ENCODE measurements at regions of chr7 and their contacts with region 1.

Region 1: GRCh38 chr7:27196287-27196767 is 3.6 kb downstream of the HOXA13 start:
- DNase-seq: peak; percentile 59
- H3K4me3 Mint-ChIP-seq: no peak overlapping the region
- H3K27ac Mint-ChIP-seq: no peak overlapping the region
- H3K4me1 Mint-ChIP-seq: peaks cover 6% of the 10 kb centered on the region
- H3K27me3 Mint-ChIP-seq: peaks cover 82% of the 10 kb centered on the region

Region 2: DNA sequence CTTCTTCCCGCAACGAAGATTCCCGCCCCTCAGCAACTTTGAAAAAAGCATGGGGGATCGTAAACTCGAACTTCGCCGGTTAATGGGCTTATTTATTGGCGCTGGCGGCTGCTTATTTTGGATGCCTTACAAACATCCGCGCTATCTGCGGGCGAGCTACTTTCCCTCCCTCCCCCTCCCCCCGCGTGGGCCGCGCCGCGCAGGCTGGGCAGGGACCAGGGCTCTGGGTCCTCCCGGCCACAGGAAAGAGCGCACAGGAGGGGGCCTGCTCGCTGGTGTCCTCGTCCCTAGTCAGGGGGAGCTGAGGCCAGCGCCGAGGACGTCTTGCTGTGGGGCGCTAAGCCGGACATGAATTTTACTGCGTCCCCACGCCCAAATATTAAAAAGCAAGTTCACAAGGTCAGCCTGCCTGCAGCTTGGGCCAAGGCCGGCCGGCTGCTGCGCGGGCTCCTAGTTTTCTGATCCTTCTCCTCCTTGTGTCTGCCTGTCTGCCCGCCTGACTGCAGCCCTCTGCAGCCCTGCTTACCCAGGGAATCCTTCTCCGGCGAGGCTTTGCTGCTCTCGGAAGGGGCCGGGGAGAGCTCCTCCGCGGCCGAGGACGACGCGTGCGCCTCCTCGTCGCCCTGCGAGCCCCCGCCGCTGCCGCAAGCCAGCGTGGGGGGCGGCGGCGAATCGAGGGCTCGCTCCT is 23.4 kb before region 1 on chr7:
- intact Hi-C with region 1: loop called (anchors 2 kb)
- DNase-seq: no peak
- H3K4me3 Mint-ChIP-seq: no peak overlapping the region
- H3K27ac Mint-ChIP-seq: no peak overlapping the region
- H3K4me1 Mint-ChIP-seq: peaks cover 2% of the 10 kb centered on the region
- H3K27me3 Mint-ChIP-seq: peaks cover 64% of the 10 kb centered on the region

Region 3: DNA sequence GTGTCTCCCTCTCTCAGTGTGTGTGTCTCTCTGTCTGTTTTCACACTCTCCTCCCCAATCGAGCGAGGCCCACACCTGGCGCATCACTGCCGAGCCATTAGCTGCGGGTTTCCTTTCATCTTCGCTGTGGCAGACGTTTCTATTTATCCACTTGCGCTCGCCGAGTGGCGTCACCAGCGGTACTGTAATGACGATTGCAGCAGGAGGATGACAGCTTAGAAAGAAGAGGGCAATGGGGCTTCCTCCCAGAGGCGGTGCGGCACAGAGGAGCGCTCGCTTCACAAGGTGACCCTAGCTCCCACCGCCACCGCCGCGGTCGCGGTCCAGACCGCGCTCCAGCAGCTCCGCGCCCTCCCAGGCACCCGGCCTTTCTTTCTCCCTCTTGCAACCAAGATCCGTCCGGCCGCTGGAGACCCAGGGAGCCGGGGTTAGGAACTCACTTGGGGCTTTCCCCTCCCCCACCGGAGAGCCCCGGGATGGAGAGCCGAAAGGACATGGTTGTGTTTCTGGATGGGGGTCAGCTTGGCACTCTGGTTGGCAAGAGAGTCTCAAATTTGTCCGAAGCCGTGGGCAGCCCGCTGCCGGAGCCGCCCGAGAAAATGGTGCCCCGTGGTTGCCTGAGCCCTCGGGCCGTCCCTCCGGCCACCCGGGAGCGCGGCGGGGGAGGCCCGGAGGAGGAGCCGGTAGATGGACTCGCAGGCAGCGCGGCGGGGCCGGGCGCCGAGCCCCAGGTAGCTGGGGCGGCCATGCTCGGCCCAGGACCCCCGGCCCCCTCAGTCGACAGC is 46.4 kb after region 1 on chr7 and contains the start of gene EVX1:
- intact Hi-C with region 1: loop called (anchors 2 kb)
- DNase-seq: no peak
- H3K4me3 Mint-ChIP-seq: no peak within 1 kb of the TSS
- H3K27ac Mint-ChIP-seq: peak within 1 kb of the TSS; percentile 35
- H3K4me1 Mint-ChIP-seq: peaks cover 1% of the 10 kb centered on the region
- H3K27me3 Mint-ChIP-seq: peaks cover 75% of the 10 kb centered on the region
- total RNA-seq, gene EVX1: not detected in 2 replicates

Region 4: DNA sequence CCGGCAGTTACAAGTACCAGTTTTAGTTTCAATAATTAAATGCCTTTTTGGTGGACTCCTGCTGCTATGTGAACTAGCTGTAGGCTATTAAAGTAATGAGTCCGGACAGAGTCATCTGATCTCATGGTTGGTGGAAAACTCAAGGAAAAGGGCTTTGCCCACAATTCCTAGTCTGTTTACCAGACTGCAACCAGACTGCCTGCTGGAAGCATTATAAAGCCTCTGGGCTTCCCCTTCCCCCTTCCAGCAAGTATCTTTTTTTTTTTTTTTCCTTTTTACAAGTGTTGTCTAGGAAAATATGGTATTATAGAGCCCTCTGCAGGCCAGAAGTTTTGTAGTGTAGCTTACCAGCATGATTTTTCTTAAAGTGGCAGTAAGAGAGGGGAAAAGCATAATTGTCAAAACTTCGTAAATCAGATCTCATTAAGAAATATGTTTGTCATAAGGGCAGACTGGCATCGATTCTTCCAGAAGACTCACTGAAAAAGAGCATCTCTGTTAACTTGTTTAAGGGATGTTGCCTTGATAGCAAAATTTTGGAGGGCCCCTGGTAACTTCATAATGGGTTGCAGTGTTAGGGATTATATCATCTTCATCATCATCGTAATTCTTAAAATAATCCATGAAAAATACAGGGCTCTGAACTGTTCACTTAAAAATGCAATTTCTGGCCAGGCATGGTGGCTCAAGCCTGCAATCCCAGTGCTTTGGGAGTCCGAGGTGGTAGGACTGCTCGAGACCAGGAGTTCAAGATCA is 724.9 kb after region 1 on chr7:
- intact Hi-C with region 1: loop called (anchors 5 kb)
- DNase-seq: no peak
- H3K4me3 Mint-ChIP-seq: no peak overlapping the region
- H3K27ac Mint-ChIP-seq: no peak overlapping the region
- H3K4me1 Mint-ChIP-seq: no peaks in the 10 kb centered on the region
- H3K27me3 Mint-ChIP-seq: peaks cover 7% of the 10 kb centered on the region

Region 5: DNA sequence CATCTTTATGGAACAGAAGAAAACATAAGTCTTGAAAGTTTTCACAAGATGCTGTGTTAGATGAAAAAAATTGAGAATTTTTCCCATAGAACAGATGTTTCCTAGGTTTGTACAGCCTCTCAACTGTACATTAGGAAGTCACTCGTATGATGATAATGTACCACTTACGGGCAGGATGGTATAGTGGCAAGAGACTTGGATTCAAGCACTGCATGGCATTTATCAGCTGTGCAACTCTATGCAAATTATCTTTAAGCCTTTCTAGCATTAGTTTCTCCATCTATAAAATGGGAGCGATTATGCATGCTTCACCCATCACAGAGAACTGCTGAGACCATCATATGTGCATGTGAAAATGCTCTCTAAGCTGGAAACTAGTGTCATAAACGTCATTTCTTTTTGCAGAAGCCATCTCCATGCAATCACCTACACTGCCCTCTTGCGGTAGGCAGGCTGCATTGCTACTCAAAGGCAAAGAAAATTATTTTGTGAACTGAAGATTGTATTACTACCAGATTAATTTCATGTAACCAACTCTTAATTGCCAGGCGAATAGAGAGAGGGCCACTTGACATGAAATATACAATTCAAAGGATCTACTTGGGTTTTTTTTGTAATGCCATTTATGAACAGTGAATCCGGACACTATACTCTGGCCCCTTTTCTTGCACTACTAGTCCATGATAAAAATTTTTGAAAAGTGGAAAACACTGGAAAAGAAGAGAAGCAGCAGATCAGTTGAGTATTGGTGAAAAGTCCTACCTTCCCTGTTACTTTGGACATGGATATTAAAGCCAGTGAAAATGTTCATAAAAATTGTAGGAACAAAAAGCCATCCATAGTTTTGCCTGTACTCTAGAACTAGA is 881.9 kb after region 1 on chr7:
- intact Hi-C with region 1: loop called (anchors 5 kb)
- DNase-seq: peak; percentile 15
- H3K4me3 Mint-ChIP-seq: no peak overlapping the region
- H3K27ac Mint-ChIP-seq: no peak overlapping the region
- H3K4me1 Mint-ChIP-seq: no peaks in the 10 kb centered on the region
- H3K27me3 Mint-ChIP-seq: peaks cover 28% of the 10 kb centered on the region